OCI-LY7 (cell line): ENCODE measurements at regions of chr5 and their contacts with region 1.

Region 1: GRCh38 chr5:95786901-95787300 is 35.6 kb downstream of the GLRX start:
- DNase-seq: no peak
- H3K4me3 ChIP-seq: no peak overlapping the region
- H3K27ac ChIP-seq: no peak overlapping the region
- H3K4me1 ChIP-seq: peaks cover 7% of the 10 kb centered on the region
- CTCF ChIP-seq: no peak

Region 2: DNA sequence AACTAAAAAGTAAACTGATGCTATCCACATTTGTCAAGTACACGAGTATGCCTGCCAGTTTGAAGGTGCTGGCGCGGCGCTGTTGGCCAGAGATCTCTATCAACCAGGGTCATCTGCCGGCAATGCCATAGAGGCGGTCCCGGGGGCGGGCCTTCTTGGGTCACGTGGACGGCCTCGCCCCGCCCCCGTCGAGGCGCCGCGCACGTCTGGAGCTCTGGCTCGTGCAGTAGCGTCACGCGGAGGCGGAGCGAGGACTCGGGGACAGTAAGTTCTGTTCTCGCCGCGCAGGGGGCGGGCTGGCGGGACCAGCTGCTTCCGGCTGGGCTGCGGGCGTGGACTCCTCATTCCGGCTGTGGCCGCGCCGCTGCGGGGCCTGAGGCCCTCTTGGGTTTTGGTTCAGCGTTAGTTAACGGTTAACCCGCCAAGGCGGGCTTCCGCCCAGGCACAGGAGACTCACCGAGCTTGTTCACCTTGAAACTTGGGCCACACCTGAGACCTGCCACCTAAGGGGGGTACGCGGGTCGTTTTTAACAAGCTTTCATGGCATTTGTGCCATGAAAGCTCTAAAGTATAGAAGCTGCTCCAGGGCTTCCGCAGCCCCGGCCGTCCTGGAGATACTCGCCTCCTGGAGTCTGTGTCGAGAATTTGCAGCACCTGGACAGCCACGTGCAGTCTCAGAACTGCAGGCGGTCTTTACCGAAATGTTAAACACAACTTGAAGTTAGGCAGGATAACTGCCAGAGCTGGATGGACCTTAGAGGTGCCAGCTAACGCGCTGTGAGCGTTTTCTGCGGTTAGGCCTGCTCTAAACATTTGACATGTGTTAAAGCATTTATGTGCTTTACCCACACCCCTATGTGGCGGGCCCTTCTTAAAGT is 140.1 kb before region 1 on chr5 and contains the start of gene RFESD:
- CTCF ChIA-PET with region 1: no interaction called
- POLR2A ChIA-PET with region 1: no interaction called
- intact Hi-C with region 1: no loop called
- DNase-seq: peak; percentile 98
- H3K4me3 ChIP-seq: peak within 1 kb of the TSS; percentile 78
- H3K27ac ChIP-seq: peak within 1 kb of the TSS; percentile 75
- H3K4me1 ChIP-seq: peaks cover 33% of the 10 kb centered on the region
- CTCF ChIP-seq: 0 out of 2 replicates have a peak, but pooled peaks have one; percentile 33
- total RNA-seq, gene RFESD: 7.6 and 9.9 TPM in 2 replicates

Region 3: GRCh38 chr5:95801532-95801931 is 14.6 kb after region 1 on chr5:
- CTCF ChIA-PET with region 1: no interaction called
- POLR2A ChIA-PET with region 1: interaction called, 11 read pairs
- intact Hi-C with region 1: no loop called
- DNase-seq: no peak
- H3K4me3 ChIP-seq: no peak overlapping the region
- H3K27ac ChIP-seq: no peak overlapping the region
- H3K4me1 ChIP-seq: no peaks in the 10 kb centered on the region
- CTCF ChIP-seq: no peak

Region 4: GRCh38 chr5:95808686-95809413 is 21.9 kb after region 1 on chr5:
- CTCF ChIA-PET with region 1: interaction called, 4 read pairs
- POLR2A ChIA-PET with region 1: interaction called, 20 read pairs
- intact Hi-C with region 1: no loop called
- DNase-seq: peak; percentile 97
- H3K4me3 ChIP-seq: peak overlapping the region; percentile 53
- H3K27ac ChIP-seq: peak overlapping the region; percentile 80
- H3K4me1 ChIP-seq: peaks cover 34% of the 10 kb centered on the region
- CTCF ChIP-seq: no peak

Region 5: GRCh38 chr5:95822542-95823181 is 35.8 kb after region 1 on chr5 and contains the start of gene GLRX:
- CTCF ChIA-PET with region 1: no interaction called
- POLR2A ChIA-PET with region 1: interaction called, 11 read pairs
- intact Hi-C with region 1: no loop called
- DNase-seq: peak; percentile 82
- H3K4me3 ChIP-seq: peak within 1 kb of the TSS; percentile 91
- H3K27ac ChIP-seq: peak within 1 kb of the TSS; percentile 87
- H3K4me1 ChIP-seq: peaks cover 57% of the 10 kb centered on the region
- CTCF ChIP-seq: no peak
- total RNA-seq, gene GLRX: 26.7 and 80.5 TPM in 2 replicates

Region 6: DNA sequence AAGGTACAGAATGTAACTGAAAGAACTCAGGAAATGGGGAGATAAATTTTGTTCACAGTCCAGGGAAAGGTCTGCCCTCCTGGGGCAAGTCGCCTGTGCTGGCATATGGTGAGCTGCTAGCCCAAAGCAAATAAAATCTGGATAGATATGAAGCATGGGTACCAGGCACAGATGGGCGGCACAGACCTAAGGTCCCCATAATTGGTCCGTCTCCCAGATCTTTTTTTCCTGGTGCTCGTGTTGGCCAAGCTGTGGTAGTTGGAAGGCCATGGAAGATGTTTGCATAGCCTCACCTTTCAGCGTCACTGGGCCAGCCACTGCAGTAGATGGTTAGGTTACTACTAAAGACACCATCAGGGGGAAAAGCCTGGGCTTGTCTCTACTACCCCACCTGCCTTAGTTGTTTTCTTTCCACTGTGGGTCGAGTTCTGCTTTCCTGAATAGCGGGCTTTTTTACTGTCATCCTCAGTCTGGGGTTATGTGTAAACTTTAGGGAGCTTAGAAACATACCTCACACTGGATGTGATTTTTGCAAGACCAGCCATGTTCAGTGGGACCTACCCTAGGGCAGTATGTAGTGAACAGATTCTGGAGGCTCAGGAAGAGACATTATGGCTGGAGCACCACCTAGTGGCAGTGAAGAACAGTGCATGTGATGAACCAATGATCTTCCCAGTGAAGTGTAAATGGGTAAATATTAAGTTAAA is 59.8 kb after region 1 on chr5:
- CTCF ChIA-PET with region 1: interaction called, 11 read pairs
- POLR2A ChIA-PET with region 1: interaction called, 13 read pairs
- intact Hi-C with region 1: no loop called
- DNase-seq: peak; percentile 81
- H3K4me3 ChIP-seq: no peak overlapping the region
- H3K27ac ChIP-seq: no peak overlapping the region
- H3K4me1 ChIP-seq: peaks cover 6% of the 10 kb centered on the region
- CTCF ChIP-seq: peak; percentile 99